Caco-2 (cell line): ENCODE measurements at regions of chr5 and their contacts with region 1.

Region 1: DNA sequence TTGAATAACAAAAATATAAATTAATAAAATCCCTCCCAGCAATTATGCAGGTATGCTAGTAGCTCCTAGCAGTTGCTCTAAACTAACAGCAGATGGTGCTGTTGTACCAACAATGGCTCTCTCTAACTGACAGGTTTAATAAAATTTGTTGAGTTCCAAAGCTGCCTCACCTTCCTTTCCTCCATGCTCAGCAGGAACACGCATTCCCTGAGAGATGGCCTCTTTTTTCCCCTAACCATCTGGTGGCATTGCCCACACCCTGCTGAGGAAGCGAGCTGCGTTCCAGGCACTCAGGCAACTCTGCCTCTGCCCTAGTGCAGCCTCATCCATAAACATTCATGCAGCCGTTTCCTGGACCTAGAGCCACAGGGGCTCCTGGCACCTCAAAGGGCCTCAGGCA is 106.2 kb downstream of the KLHL3 start:
- DNase-seq: peak in 1 of 2 experiments; percentile 59
- H3K4me3 ChIP-seq: no peak overlapping the region
- H3K4me3 Mint-ChIP-seq: no peak overlapping the region
- H3K27ac Mint-ChIP-seq: no peak overlapping the region
- H3K4me1 ChIP-seq: no peaks in the 10 kb centered on the region
- H3K4me1 Mint-ChIP-seq: no peaks in the 10 kb centered on the region
- H3K27me3 ChIP-seq: no peaks in the 10 kb centered on the region; the same call in 1 of the 2 replicates
- H3K27me3 Mint-ChIP-seq: peaks cover 4% of the 10 kb centered on the region
- CTCF ChIP-seq: peak; percentile 88 to 94

Region 2: DNA sequence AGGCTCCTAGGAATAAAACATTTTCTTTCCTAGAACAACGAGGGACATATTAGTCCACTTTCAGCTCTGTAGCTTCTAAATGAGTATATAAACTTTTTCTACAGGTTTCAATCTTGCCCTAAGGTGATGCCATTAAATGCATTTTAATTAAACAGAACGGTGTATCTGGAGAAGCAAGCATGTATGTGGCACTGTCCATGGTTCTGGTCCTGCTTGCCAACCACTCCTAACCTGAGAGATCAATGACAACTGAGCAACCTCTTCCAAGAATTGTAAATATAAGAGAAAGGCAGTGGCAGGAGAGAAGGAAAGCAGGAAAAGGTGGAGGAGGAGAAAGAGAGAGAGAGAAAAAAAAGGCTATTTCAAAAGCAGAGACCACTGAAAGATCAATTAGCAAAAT is 34.9 kb before region 1 on chr5:
- CTCF ChIA-PET with region 1: no interaction called
- POLR2A ChIA-PET with region 1: no interaction called
- intact Hi-C with region 1: no loop called
- DNase-seq: no peak
- H3K4me3 ChIP-seq: no peak overlapping the region
- H3K4me3 Mint-ChIP-seq: no peak overlapping the region
- H3K27ac Mint-ChIP-seq: no peak overlapping the region
- H3K4me1 ChIP-seq: no peaks in the 10 kb centered on the region
- H3K4me1 Mint-ChIP-seq: no peaks in the 10 kb centered on the region
- H3K27me3 ChIP-seq: no peaks in the 10 kb centered on the region; the same call in 1 of the 2 replicates
- H3K27me3 Mint-ChIP-seq: peaks cover 30% of the 10 kb centered on the region
- CTCF ChIP-seq: no peak

Region 3: DNA sequence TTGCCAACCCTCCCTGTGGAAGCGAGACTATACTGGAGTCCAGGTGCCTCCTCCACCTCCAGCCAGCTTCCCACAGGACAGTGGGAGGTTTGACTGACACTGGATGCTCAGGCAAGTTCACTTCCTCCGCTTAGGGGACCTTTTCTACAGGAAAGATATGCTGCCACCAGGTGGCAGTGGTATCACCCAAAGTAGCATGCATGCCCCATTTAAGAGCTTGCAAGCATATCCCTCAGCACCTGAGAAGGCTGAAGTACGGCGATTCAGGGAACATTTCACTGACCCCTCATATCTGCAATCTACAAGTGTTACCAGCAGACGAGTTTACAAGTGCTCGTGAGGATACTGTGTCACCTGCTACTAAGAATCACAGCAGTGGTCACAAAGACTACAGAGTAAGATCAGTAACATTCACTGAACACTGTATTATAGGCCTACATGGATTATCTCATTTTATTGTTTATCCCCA is 30.7 kb after region 1 on chr5:
- CTCF ChIA-PET with region 1: interaction called, 27 read pairs
- POLR2A ChIA-PET with region 1: no interaction called
- intact Hi-C with region 1: loop called (anchors 1 kb)
- DNase-seq: peak; percentile 77 to 78
- H3K4me3 ChIP-seq: no peak overlapping the region
- H3K4me3 Mint-ChIP-seq: no peak overlapping the region
- H3K27ac Mint-ChIP-seq: no peak overlapping the region
- H3K4me1 ChIP-seq: no peaks in the 10 kb centered on the region
- H3K4me1 Mint-ChIP-seq: no peaks in the 10 kb centered on the region
- H3K27me3 ChIP-seq: no peaks in the 10 kb centered on the region
- H3K27me3 Mint-ChIP-seq: peaks cover 2% of the 10 kb centered on the region
- CTCF ChIP-seq: peak; percentile 70 to 88

Region 4: DNA sequence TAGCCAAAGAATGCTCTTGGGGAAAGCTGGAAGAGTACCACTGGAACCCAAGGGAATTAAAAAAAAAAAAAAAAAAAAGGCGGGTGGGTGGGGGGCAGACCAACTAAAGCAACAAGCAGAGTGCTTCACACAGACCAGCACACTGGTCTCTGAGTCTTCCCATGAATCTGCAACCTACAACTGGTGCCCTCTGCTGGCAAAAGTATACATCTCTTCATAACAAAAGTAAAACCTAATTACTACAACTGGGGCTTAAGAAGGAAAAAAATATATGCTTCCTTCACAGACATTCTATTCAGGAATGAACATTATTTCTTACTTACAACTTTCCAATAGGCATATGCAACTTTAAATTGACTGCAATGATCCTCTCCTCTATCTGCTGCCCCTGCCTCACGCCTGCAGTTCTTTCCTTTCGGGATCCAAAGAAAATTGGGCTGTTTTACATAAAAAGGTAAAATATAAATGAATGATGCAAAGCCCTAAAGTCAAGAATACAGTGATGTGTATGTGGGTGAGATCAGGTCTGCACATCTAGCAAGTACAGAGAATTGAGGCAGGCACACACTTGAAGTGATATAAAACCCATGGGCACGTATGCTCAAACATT is 113.5 kb after region 1 on chr5:
- CTCF ChIA-PET with region 1: interaction called, 78 read pairs
- POLR2A ChIA-PET with region 1: no interaction called
- intact Hi-C with region 1: loop called (anchors 1 kb)
- DNase-seq: peak; percentile 65 to 70
- H3K4me3 ChIP-seq: no peak overlapping the region
- H3K4me3 Mint-ChIP-seq: no peak overlapping the region
- H3K27ac Mint-ChIP-seq: no peak overlapping the region
- H3K4me1 ChIP-seq: peaks cover 14% of the 10 kb centered on the region; the same call in 1 of the 2 replicates
- H3K4me1 Mint-ChIP-seq: no peaks in the 10 kb centered on the region
- H3K27me3 ChIP-seq: no peaks in the 10 kb centered on the region
- H3K27me3 Mint-ChIP-seq: no peaks in the 10 kb centered on the region
- CTCF ChIP-seq: peak; percentile 63 to 65

Region 5: DNA sequence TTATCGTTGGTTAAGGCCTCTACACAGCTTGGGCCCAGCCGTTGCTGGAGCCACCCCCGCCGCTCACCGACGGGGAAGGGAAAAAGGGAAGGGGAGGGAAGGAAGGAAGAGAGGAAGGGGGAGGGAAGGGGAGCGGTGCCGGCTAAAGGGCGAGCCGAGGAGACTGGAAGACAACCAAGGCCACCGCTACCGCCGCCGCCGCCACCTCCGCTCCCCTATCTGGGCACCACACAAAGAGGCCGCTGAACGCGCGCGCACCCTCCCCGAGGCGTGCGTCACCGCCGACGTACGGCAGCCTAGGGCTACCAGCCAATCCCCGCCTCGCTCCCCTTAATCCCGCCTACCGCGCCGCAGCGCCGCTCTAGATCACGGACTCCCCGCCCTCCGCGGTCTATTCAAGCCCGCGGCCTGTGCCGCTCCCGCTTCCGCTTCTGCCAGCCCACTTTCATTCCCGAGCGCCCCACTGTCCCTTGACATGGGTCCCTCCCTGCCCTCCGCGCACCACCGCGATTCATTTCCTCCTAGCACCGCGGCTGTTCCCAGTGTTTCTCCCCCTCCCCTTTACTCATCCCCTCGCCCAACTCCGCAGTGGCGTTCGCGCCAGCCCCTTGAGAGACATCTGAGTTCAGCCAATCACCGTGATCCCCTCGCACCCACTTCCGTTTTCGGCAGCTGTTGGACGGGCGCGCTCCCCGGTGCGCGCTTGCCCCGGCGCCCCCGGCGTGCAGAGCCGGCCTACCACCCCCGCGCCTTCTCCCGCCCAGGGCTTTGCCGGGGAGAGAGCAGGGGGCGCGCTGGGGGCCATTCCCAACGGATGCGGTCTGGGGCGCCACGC is 124.7 kb after region 1 on chr5 and contains the start of gene HNRNPA0:
- CTCF ChIA-PET with region 1: interaction called, 7 read pairs
- POLR2A ChIA-PET with region 1: interaction called, 10 read pairs
- intact Hi-C with region 1: no loop called
- DNase-seq: peak; percentile 97 to 98
- H3K4me3 ChIP-seq: peak within 1 kb of the TSS; percentile 91
- H3K4me3 Mint-ChIP-seq: peak within 1 kb of the TSS; percentile 97
- H3K27ac Mint-ChIP-seq: peak within 1 kb of the TSS; percentile 100
- H3K4me1 ChIP-seq: peaks cover 20% of the 10 kb centered on the region
- H3K4me1 Mint-ChIP-seq: no peaks in the 10 kb centered on the region
- H3K27me3 ChIP-seq: no peaks in the 10 kb centered on the region
- H3K27me3 Mint-ChIP-seq: no peaks in the 10 kb centered on the region
- CTCF ChIP-seq: no peak
- total RNA-seq, gene HNRNPA0: 41.9 and 42.5 TPM in 2 replicates

Region 6: DNA sequence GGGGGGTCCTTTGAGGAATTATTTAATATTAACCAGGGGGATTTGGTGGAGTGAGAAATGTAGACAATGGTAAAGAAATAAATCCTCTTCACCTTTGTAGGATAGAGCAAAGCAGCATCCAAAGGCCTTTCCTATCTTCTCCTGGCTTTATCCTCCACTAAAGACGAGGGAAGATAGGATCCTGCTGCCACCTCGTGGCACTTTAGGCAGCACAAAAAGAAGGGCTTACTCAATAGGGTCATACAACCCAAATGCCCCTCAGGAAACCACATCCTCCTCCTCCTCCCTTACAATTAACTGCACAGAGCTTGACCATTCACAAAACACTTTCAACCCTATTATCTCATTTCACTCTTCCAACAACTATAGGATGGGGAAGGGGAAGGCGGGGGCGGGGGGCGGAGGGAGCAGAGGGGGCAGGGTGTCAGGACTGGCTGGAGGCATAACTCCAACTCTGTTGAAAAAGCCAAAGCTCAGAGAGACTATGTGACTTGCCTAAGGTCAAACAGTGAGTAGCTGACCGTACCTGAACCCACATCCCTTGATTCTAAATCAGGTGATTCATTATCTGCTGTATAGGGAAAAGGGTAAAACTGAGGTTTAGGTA is 192.6 kb after region 1 on chr5:
- CTCF ChIA-PET with region 1: interaction called, 7 read pairs
- POLR2A ChIA-PET with region 1: no interaction called
- intact Hi-C with region 1: loop called (anchors 1 kb)
- DNase-seq: peak; percentile 59 to 66
- H3K4me3 ChIP-seq: no peak overlapping the region
- H3K4me3 Mint-ChIP-seq: no peak overlapping the region
- H3K27ac Mint-ChIP-seq: no peak overlapping the region
- H3K4me1 ChIP-seq: no peaks in the 10 kb centered on the region
- H3K4me1 Mint-ChIP-seq: peaks cover 12% of the 10 kb centered on the region
- H3K27me3 ChIP-seq: no peaks in the 10 kb centered on the region
- H3K27me3 Mint-ChIP-seq: no peaks in the 10 kb centered on the region
- CTCF ChIP-seq: peak; percentile 58 to 84

Region 7: DNA sequence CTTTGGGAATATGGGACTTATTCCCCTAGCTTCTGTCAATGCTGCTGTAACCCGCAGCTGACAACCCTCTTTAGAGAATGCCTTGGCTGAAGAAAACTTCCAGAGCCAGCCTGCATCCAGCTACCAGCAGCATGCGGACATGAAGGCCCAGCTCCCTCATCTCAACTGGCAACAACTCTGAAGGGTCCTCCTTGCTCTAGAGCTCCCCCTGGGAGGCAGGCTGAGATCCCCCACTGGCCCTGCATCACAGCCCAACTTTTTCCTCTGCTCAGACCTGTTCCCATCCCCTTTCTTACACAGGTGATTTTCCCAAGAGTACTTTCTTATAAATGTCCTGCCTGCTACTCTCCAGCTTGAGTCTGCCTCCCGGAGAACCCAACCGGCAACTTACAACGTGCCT is 435.5 kb after region 1 on chr5:
- CTCF ChIA-PET with region 1: interaction called, 3 read pairs
- POLR2A ChIA-PET with region 1: no interaction called
- intact Hi-C with region 1: loop called (anchors 2 kb)
- DNase-seq: peak; percentile 42 to 58
- H3K4me3 ChIP-seq: no peak overlapping the region
- H3K4me3 Mint-ChIP-seq: no peak overlapping the region
- H3K27ac Mint-ChIP-seq: no peak overlapping the region
- H3K4me1 ChIP-seq: 0 out of 2 replicates have a peak, but pooled peaks cover 6% of the 10 kb centered on the region
- H3K4me1 Mint-ChIP-seq: no peaks in the 10 kb centered on the region
- H3K27me3 ChIP-seq: no peaks in the 10 kb centered on the region
- H3K27me3 Mint-ChIP-seq: no peaks in the 10 kb centered on the region
- CTCF ChIP-seq: peak; percentile 67 to 68

Region 8: DNA sequence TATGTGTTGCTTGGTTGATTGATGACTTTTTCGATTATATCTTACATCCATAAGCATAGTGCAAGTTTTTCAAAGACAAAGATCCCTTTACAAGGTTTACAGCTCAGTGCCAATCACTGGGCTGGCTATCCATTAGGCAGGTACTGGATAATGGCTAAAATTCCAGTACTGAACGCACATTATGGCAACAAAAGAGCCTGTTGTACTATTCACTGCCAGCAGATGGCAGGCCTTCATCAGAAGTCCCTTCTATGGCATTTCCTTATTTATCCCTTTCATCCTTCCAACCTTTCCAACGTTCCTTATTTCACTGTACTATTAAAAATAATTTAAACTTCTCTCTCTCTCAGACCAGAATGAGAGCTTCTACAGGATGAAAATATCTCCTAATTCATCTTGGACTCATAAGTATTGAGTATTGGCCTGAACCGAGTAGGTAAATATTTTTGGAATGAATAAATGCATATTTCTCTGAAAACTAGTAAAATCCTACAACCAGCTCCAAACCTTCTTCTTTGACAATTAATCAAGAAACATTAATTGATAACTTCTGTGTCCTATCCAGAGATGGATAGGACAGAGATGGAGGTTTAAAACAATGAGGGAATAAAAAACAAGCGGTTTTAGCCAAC is 447.5 kb after region 1 on chr5:
- CTCF ChIA-PET with region 1: no interaction called
- POLR2A ChIA-PET with region 1: no interaction called
- intact Hi-C with region 1: no loop called
- DNase-seq: peak; percentile 67 to 75
- H3K4me3 ChIP-seq: no peak overlapping the region
- H3K4me3 Mint-ChIP-seq: no peak overlapping the region
- H3K27ac Mint-ChIP-seq: no peak overlapping the region
- H3K4me1 ChIP-seq: peaks cover 21% of the 10 kb centered on the region
- H3K4me1 Mint-ChIP-seq: peaks cover 16% of the 10 kb centered on the region
- H3K27me3 ChIP-seq: no peaks in the 10 kb centered on the region
- H3K27me3 Mint-ChIP-seq: no peaks in the 10 kb centered on the region
- CTCF ChIP-seq: peak; percentile 79 to 88

Region 9: DNA sequence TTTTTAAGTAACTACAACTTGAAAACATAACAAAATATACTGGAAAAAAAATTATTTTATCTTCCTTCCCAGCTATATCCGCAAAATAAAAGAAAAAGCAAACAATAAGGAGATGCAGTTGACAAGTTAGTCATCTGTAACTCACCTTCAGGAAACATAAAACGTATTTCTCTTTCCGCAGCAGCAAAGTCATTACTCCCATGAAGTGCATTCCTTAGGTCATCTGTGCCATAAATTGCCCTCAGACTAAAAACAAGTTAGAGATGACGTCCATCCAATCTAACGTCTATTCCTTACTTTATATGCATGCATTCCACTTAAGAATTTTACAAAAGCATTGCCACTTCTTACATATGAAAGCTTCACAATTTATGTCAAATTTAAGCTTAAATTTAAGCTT is 498.7 kb after region 1 on chr5:
- CTCF ChIA-PET with region 1: no interaction called
- POLR2A ChIA-PET with region 1: no interaction called
- intact Hi-C with region 1: loop called (anchors 1 kb)
- DNase-seq: no peak
- H3K4me3 ChIP-seq: no peak overlapping the region
- H3K4me3 Mint-ChIP-seq: no peak overlapping the region
- H3K27ac Mint-ChIP-seq: no peak overlapping the region
- H3K4me1 ChIP-seq: 0 out of 2 replicates have a peak, but pooled peaks cover 6% of the 10 kb centered on the region
- H3K4me1 Mint-ChIP-seq: peaks cover 5% of the 10 kb centered on the region
- H3K27me3 ChIP-seq: no peaks in the 10 kb centered on the region
- H3K27me3 Mint-ChIP-seq: no peaks in the 10 kb centered on the region
- CTCF ChIP-seq: no peak